PC-3 (cell line): ENCODE measurements at regions of chr1 and their contacts with region 1.

Region 1: DNA sequence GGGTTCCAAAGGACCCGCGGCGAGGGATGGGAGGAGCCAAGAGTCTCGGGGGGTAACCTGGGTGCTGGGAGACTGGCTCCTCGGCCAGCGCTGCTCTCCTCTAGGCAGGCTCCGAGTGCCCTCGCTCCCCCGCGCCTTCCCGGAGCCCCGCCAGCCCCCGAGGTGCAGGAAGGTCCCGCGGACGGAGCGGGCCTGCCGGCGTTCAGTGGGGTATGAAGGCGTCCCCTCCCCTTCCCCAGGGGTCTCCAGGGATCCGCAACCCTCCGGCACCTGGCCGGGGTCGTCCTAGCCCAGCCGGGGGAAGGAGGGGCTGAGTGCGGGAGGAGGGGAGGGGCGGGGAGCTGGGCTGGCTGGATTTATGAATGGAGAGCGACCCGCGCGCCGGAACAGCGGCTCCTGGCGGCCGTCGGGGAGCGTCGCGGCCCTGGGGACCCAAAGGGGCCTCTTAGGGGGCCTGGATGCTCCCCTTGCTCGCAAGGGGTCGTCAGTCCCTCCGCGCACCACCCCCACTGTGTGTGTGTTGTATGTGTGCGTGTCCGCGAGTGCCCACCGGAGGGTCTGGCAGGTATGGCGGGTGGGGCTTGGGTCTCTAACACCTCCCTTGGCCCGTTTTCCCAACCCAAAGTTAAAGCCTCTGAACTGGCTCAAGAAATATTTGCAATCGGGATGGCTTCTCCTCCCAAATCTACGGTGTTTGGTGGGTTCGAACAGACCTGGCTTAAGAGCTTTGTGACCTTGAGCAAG is 600 bp downstream of the HCRTR1 start:
- DNase-seq: peak; percentile 54
- ATAC-seq: peak; percentile 76
- H3K4me3 ChIP-seq: peak overlapping the region; percentile 71
- H3K27ac ChIP-seq: no peak overlapping the region
- H3K4me1 ChIP-seq: no peaks in the 10 kb centered on the region
- H3K27me3 ChIP-seq: no peaks in the 10 kb centered on the region
- CTCF ChIP-seq: peak; percentile 84

Region 2: GRCh38 chr1:31564134-31564989 is 53.7 kb before region 1 on chr1:
- CTCF ChIA-PET with region 1: no interaction called
- POLR2A ChIA-PET with region 1: no interaction called
- intact Hi-C with region 1: loop called (anchors 1 kb)
- DNase-seq: peak; percentile 88
- ATAC-seq: peak; percentile 60
- H3K4me3 ChIP-seq: no peak overlapping the region
- H3K27ac ChIP-seq: peak overlapping the region; percentile 79
- H3K4me1 ChIP-seq: peaks cover 33% of the 10 kb centered on the region
- H3K27me3 ChIP-seq: no peaks in the 10 kb centered on the region
- CTCF ChIP-seq: peak; percentile 93

Region 3: GRCh38 chr1:31576201-31576669 is 41.9 kb before region 1 on chr1 and contains the start of gene TINAGL1:
- CTCF ChIA-PET with region 1: no interaction called
- POLR2A ChIA-PET with region 1: no interaction called
- intact Hi-C with region 1: no loop called
- DNase-seq: peak; percentile 94
- ATAC-seq: peak; percentile 65
- H3K4me3 ChIP-seq: peak within 1 kb of the TSS; percentile 71
- H3K27ac ChIP-seq: peak within 1 kb of the TSS; percentile 98
- H3K4me1 ChIP-seq: peaks cover 68% of the 10 kb centered on the region
- H3K27me3 ChIP-seq: no peaks in the 10 kb centered on the region
- CTCF ChIP-seq: no peak
- total RNA-seq, gene TINAGL1: 176 and 217 TPM in 2 replicates

Region 4: DNA sequence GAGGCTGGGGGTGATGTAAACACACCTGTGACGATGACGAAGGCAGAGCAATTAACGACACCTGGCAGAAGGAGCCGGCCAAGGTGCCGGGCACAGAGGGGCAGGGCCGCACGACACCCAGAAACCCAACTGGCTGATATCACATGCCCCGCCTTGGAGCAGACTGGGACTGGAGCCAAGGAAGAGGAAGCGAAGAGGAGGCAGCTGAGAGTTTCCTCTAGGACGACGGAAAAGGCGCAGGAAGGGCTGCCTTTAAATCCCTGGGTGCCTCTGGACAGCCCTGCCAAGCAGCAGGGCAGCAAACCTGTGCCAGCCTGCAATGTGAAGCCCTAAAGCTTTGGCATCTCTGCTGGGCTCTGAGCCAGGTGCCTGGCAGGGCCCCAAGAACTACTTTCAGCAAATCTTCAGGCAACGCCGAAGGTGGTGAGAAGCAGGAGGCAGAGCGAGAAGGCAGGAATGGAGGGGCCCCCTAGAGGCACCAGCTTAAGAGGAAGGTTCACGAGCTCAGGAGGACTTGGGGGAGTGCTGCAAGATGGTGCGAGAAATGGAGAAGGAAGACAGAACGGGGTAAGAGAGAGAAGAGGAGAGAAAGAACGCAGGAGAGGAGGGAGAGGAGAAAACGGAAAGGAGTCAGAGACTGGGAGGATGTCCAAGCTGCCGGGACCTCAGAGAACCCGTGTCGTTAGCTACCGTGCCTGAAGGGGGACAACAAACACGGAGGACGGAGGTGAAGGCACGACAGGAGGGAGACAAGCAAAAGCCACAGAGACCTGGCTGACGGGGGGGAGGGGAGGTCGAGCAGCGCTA is 51.9 kb after region 1 on chr1:
- CTCF ChIA-PET with region 1: no interaction called
- POLR2A ChIA-PET with region 1: no interaction called
- intact Hi-C with region 1: no loop called
- DNase-seq: peak; percentile 77
- ATAC-seq: peak; percentile 70
- H3K4me3 ChIP-seq: peak overlapping the region; percentile 60
- H3K27ac ChIP-seq: peak overlapping the region; percentile 43
- H3K4me1 ChIP-seq: peaks cover 28% of the 10 kb centered on the region
- H3K27me3 ChIP-seq: no peaks in the 10 kb centered on the region
- CTCF ChIP-seq: peak; percentile 60